Breast epithelium (tissue), 4 donors: ENCODE measurements at regions of chr10 and their contacts with region 1.

Region 1: GRCh38 chr10:94315024-94315451 is 47.7 kb downstream of the NOC3L start:
- DNase-seq: no peak
- H3K4me3 ChIP-seq: no peak overlapping the region
- H3K27ac ChIP-seq: no peak overlapping the region
- H3K4me1 ChIP-seq: no peaks in the 10 kb centered on the region
- H3K27me3 ChIP-seq: no peaks in the 10 kb centered on the region
- CTCF ChIP-seq: no peak
- POLR2A ChIP-seq: no peak

Region 2: DNA sequence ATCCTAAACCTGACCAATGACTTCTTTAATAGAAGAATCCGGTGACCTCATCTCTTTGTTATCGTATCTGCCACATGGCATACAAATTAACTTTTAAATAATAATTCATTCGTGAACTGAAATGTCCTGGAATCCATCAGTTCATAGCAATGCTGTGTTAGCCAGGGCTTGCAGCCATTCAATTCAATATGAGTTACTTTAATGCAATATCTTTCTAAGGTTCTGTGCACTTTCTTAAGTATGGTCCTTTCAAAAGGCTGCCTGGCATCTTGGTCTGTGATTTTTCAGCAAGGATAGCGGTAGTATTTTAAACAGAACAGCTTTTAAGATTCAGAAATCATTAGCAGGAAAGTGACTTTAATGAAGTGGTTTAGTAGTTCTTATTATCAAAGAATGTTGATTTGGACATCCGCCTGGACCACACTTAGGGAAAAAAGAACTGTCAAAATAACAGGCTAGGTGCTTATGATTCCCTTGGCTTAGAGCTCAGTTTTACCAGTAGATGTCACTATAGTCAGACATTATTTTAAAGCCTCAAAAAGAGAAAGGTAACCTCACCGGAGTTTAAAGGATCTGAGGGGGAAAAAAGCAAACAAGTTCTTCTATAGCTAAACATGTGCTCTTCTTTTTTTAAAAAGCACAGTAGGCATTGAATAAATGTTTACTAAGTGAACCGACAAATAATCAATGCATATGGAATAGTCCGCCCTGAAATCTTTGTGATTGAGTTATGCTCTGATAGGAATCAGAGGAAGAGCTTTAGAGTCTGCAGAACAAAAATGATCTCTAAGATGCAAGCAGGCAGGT is 398.6 kb before region 1 on chr10:
- intact Hi-C with region 1: loop called (anchors 10 kb)
- DNase-seq: no peak
- H3K4me3 ChIP-seq: peak overlapping the region in 2 of 3 donors; percentile 29 to 38
- H3K27ac ChIP-seq: no peak overlapping the region
- H3K4me1 ChIP-seq: no peaks in the 10 kb centered on the region
- H3K27me3 ChIP-seq: no peaks in the 10 kb centered on the region
- CTCF ChIP-seq: peak in 2 of 3 donors; percentile 51
- POLR2A ChIP-seq: no peak

Region 3: DNA sequence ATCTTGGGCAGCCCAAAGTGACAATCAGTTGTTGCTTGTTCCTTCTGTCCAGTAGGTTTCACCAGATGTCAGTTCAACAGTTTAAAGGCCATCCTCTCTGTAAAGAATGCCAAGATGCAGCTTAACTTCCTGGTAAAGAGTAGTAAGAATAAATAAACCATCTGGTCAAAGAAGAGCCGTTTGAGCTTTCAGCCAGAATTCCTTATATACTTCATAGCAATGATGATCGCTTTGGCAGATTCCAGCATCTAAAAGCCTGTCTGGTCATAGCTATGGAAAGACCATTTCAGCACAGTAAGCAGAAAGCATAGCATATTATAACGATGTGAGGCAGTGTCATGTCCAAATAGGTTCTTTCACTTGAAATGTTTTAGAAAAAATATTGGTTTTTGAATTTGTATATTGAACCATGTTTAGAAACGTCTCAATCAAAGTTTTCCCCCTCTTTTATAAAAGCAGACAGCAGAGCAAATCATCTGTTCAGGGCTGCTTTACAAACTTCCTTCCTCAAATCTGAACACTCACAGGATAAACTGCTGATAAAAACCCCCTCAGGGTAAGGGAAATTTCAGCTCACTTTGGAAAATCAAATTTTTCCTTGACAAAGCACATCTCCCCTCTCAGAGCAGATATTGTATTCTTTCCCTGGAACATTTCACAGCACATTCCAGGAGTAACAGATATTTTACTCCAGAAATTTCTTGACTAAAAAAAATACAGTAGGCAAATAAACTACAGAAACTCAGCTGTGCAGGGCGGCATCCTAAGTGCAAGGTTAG is 136.4 kb before region 1 on chr10:
- intact Hi-C with region 1: no loop called
- DNase-seq: no peak
- H3K4me3 ChIP-seq: no peak overlapping the region
- H3K27ac ChIP-seq: no peak overlapping the region
- H3K4me1 ChIP-seq: no peaks in the 10 kb centered on the region
- H3K27me3 ChIP-seq: no peaks in the 10 kb centered on the region
- CTCF ChIP-seq: no peak
- POLR2A ChIP-seq: no peak

Region 4: GRCh38 chr10:94344522-94345122 is 29.6 kb after region 1 on chr10:
- intact Hi-C with region 1: no loop called
- DNase-seq: no peak
- H3K4me3 ChIP-seq: no peak overlapping the region
- H3K27ac ChIP-seq: no peak overlapping the region
- H3K4me1 ChIP-seq: no peaks in the 10 kb centered on the region
- H3K27me3 ChIP-seq: no peaks in the 10 kb centered on the region
- CTCF ChIP-seq: no peak
- POLR2A ChIP-seq: no peak

Region 5: DNA sequence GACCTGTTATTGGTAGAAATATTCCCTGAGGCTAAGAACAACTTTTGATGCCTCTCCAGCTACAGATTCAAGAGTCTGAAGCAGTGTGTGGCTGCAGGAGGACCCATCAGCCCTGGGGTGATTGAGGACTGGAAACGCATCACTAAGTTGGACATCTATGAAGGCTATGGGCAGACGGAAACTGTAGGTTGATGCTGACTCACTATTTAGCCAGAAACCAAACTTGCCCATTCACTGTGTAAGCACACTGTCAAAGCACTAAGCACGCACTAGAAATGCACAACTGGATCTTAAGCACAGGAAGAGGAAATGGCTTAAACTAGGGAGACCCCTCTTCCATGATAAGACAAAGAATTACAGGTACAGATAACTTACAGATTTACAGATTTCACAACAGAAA is 899.8 kb after region 1 on chr10:
- intact Hi-C with region 1: no loop called
- DNase-seq: no peak
- H3K4me3 ChIP-seq: no peak overlapping the region
- H3K27ac ChIP-seq: no peak overlapping the region
- H3K4me1 ChIP-seq: no peaks in the 10 kb centered on the region
- H3K27me3 ChIP-seq: no peaks in the 10 kb centered on the region
- CTCF ChIP-seq: no peak
- POLR2A ChIP-seq: no peak